ENCODE measurements at regions of chr5 and their contacts with region 1.

Region 1: DNA sequence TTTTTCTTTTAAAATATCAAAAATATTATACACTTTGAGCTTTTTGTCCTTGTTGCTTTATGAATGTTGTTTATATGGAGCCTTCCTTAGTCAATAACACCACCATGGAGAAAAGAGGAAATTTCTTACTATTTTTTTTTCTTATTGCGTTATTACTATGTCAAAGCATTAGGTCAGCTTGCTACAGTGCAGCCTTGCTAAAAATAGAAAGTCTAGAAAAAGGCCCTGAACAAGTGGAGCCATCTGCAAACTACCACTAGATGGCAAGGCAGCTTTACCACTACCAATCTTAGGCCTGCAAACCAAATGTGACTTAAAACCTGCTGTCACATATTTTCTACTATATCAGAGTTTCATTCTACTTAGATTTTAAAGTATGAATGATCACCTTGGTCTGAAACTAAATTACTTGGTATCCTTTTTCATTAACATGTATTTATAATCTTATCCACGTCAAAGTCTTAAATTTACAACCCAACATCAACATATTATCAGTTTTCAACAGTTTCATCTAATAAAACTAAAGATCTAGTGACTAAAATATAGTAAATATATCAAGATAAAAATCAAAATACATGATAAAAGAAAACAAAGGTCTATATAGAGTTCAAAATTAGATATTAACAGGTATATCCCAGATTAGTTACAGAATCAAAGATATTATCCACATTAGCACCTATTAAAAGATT is 113.1 kb upstream of the ACOT12 start:
- DNase-seq: peak; percentile 93

Region 2: DNA sequence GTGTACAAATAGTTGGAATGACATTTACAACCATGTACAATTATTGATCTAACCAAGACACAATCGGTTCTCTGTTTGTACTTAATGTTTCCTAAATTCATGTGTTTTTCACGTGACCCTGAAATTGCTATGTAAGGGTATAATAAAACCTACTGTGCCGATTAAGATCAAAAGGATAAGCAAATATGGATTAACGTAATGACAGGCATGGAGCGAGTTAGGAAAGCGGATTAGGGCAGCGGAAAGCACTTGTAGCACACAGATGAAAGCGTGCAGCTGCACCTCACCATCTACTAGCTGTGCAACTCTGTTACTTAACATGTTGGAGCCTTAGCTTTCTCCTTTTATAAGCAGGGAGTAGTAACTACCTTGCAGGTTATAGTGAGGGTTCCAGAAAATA is 1137.5 kb before region 1 on chr5:
- in situ Hi-C with region 1: no loop called
- DNase-seq: no peak

Region 3: GRCh38 chr5:81838307-81838906 is 331.4 kb after region 1 on chr5:
- in situ Hi-C with region 1: loop called (anchors 25 kb)
- DNase-seq: peak; percentile 69